Caco-2 (cell line): ENCODE measurements at regions of chr5 and their contacts with region 1.

Region 1: DNA sequence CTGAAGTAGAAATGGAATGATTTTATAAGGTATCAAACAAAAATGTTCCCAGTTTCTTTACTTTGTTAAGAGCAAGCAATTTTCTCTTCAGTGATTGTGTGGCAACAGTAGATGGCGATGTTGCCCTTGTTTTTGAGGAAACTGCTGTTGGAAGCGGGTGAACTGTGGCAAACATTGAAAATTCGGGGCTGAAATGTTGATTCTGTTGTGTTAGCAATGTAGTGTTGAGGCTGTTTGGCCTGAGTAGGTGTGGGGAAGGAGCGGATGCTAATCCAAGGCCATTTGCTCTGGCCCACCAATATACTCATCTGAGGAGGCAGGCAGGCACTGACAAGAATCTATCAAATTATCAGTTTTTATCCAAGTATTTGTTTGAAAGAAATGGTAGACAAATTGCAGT is 129.8 kb downstream of the SLC12A2 start:
- DNase-seq: peak; percentile 60 to 69
- H3K4me3 ChIP-seq: no peak overlapping the region
- H3K4me3 Mint-ChIP-seq: no peak overlapping the region
- H3K27ac Mint-ChIP-seq: no peak overlapping the region
- H3K4me1 ChIP-seq: no peaks in the 10 kb centered on the region
- H3K4me1 Mint-ChIP-seq: no peaks in the 10 kb centered on the region
- H3K27me3 ChIP-seq: no peaks in the 10 kb centered on the region
- H3K27me3 Mint-ChIP-seq: no peaks in the 10 kb centered on the region
- CTCF ChIP-seq: peak; percentile 74 to 87

Region 2: GRCh38 chr5:128426090-128426534 is 212.8 kb after region 1 on chr5:
- CTCF ChIA-PET with region 1: no interaction called
- POLR2A ChIA-PET with region 1: no interaction called
- intact Hi-C with region 1: loop called (anchors 10 kb)
- DNase-seq: no peak
- H3K4me3 ChIP-seq: no peak overlapping the region
- H3K4me3 Mint-ChIP-seq: no peak overlapping the region
- H3K27ac Mint-ChIP-seq: no peak overlapping the region
- H3K4me1 ChIP-seq: peaks cover 11% of the 10 kb centered on the region
- H3K4me1 Mint-ChIP-seq: peaks cover 16% of the 10 kb centered on the region
- H3K27me3 ChIP-seq: no peaks in the 10 kb centered on the region
- H3K27me3 Mint-ChIP-seq: no peaks in the 10 kb centered on the region
- CTCF ChIP-seq: no peak

Region 3: GRCh38 chr5:128674825-128675446 is 461.6 kb after region 1 on chr5:
- CTCF ChIA-PET with region 1: no interaction called
- POLR2A ChIA-PET with region 1: no interaction called
- intact Hi-C with region 1: loop called (anchors 1 kb)
- DNase-seq: peak; percentile 53 to 66
- H3K4me3 ChIP-seq: no peak overlapping the region
- H3K4me3 Mint-ChIP-seq: no peak overlapping the region
- H3K27ac Mint-ChIP-seq: no peak overlapping the region
- H3K4me1 ChIP-seq: no peaks in the 10 kb centered on the region
- H3K4me1 Mint-ChIP-seq: no peaks in the 10 kb centered on the region
- H3K27me3 ChIP-seq: no peaks in the 10 kb centered on the region
- H3K27me3 Mint-ChIP-seq: no peaks in the 10 kb centered on the region
- CTCF ChIP-seq: peak; percentile 58 to 68

Region 4: GRCh38 chr5:128905571-128906110 is 692.3 kb after region 1 on chr5:
- CTCF ChIA-PET with region 1: no interaction called
- POLR2A ChIA-PET with region 1: no interaction called
- intact Hi-C with region 1: loop called (anchors 5 kb)
- DNase-seq: peak in 1 of 2 experiments; percentile 62
- H3K4me3 ChIP-seq: no peak overlapping the region
- H3K4me3 Mint-ChIP-seq: no peak overlapping the region
- H3K27ac Mint-ChIP-seq: no peak overlapping the region
- H3K4me1 ChIP-seq: no peaks in the 10 kb centered on the region
- H3K4me1 Mint-ChIP-seq: no peaks in the 10 kb centered on the region
- H3K27me3 ChIP-seq: no peaks in the 10 kb centered on the region
- H3K27me3 Mint-ChIP-seq: no peaks in the 10 kb centered on the region
- CTCF ChIP-seq: peak; percentile 64 to 77